MCF 10A (cell line): ENCODE measurements at regions of chr20 and their contacts with region 1.

Region 1: GRCh38 chr20:25508078-25508770 is 77.1 kb downstream of the NINL start:
- DNase-seq: peak; percentile 87
- H3K4me3 Mint-ChIP-seq: no peak overlapping the region
- H3K27ac Mint-ChIP-seq: no peak overlapping the region
- H3K4me1 Mint-ChIP-seq: peaks cover 12% of the 10 kb centered on the region
- H3K27me3 Mint-ChIP-seq: no peaks in the 10 kb centered on the region
- CTCF ChIP-seq: no peak

Region 2: DNA sequence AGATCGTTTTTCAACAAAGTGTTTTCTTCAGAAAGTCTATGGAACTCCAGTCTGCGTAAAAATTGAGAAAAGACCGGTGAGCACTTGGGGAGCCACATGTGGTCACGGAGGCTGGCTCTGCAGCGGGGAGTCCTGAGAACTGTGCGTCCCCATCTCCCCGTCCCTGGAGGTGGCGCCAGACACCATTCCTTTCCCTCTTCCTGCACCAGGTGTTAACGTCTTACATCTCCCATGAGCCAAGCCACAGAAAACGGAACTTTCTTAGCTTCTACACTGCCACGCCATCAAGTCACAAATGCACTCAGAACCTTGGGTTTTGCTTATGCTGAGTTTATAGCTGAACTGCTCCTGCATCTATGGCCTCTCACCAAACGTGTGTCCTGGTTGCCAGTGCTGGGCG is 38.2 kb before region 1 on chr20:
- CTCF ChIA-PET with region 1: interaction called, 12 read pairs
- POLR2A ChIA-PET with region 1: no interaction called
- intact Hi-C with region 1: no loop called
- DNase-seq: peak; percentile 73
- H3K4me3 Mint-ChIP-seq: no peak overlapping the region
- H3K27ac Mint-ChIP-seq: no peak overlapping the region
- H3K4me1 Mint-ChIP-seq: no peaks in the 10 kb centered on the region
- H3K27me3 Mint-ChIP-seq: no peaks in the 10 kb centered on the region
- CTCF ChIP-seq: peak; percentile 66

Region 3: DNA sequence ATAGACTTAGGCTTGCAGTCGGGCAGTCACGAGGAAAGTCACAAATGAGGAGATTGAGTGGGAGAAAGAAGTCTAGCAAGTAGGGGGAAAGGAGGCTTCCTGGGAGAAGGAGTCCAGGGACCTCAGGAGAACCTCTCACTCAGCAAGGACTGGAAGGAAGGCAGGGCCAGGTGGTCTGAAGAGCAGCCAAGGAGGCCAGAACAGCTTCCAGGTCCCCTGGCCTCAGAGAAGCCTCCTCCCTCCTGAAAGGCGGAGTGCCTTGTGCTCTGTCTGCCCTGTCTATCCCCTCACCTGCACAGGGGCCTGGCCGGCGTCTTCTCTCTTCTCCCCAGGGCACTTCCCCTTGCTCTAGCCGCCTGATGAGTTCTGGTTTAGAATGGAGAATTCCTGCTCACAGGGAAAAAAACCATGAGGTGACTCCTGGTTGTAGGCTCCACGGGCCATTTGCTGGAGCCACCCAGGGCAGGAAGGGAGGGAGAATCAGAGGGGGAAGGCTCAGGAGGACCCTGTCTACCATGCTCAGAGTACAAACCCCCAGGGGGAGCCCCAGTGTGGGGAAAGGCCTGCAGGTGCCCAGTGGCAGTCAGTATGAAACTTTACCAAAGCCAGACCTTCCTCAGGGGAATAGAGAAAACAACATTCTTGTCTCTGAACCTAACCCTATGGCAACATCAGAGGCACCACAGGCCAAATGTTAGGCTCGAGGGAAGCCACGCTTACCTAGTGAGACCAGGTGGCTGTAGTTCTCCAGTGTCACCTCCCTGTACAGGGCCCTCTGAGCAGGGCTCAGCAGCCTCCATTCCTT is 177.3 kb after region 1 on chr20:
- CTCF ChIA-PET with region 1: no interaction called
- POLR2A ChIA-PET with region 1: no interaction called
- intact Hi-C with region 1: no loop called
- DNase-seq: no peak
- H3K4me3 Mint-ChIP-seq: no peak overlapping the region
- H3K27ac Mint-ChIP-seq: no peak overlapping the region
- H3K4me1 Mint-ChIP-seq: no peaks in the 10 kb centered on the region
- H3K27me3 Mint-ChIP-seq: no peaks in the 10 kb centered on the region
- CTCF ChIP-seq: no peak